Left ventricle myocardium superior (tissue), 1 donor: ENCODE measurements at regions of chr17 and their contacts with region 1.

Region 1: DNA sequence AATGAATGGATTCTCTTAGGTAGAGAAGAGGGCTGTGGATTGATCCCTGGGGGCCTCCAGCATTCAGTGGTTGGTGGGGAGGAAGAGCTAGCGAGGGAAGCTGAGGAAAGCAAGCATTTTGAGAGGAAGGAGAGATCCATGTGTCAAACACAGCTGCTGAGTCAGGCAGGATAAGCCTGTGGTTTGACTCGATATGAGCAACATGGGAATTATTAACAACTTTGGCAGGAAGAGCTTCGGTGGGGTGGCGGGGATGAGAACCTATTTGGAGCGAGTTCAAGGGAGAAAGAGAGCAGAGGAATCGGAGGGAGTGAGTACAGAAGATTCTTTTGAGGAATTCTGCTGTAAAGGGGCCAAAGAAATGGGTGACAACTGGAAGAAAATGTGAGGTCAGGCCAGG is 59.5 kb upstream of the CDC42EP4 start:
- DNase-seq: no peak
- ATAC-seq: no peak

Region 2: GRCh38 chr17:73255671-73256181 is 115.6 kb before region 1 on chr17:
- intact Hi-C with region 1: loop called (anchors 2 kb)
- DNase-seq: peak; percentile 71
- ATAC-seq: peak; percentile 81

Region 3: DNA sequence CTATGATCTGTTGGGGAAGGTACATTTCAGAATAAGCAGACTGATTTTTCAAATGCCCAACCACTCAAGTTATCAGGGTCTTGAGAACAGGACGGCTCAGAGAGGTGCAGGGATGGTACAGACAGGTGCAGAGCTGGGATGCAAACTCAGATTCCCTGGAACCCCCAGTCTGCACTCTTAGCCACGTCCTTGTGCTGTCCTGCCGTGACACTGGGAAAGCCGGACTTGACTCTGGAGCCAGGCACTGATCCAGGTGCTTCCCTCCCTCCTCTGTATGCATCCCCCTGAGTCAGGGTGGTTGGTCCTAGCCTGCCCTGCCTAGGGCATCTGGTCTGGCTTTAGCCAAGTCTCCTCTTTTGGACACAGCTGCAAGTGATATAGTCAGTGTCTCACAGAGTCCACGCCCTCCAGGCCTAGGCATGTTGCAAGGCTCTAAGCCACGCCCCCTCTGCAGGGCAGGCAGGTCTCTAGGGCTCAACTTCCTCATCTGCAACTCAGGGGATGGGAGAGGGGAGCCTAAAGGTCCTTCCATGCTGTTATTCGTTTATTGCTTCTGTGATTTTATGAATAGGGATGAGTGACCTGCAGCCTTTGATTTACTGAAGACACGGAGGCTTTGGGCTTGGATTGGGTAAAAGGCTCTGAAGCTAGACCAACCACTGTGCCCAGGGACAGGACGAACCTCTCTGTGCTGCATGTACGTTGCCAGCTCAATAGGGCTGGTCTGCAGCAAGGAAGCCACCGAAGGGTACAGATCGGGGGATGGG is 175.7 kb after region 1 on chr17:
- intact Hi-C with region 1: no loop called
- DNase-seq: peak; percentile 47
- ATAC-seq: no peak